ENCODE measurements at regions of chr4 and their contacts with region 1.

Region 1: GRCh38 chr4:163048447-163048846 is 118.2 kb downstream of the NAF1 start:
- DNase-seq: no peak
- ATAC-seq: peak; percentile 87
- H3K4me3 ChIP-seq: no peak overlapping the region
- H3K27ac ChIP-seq: no peak overlapping the region
- H3K4me1 ChIP-seq: no peaks in the 10 kb centered on the region
- H3K27me3 ChIP-seq: no peaks in the 10 kb centered on the region; a peak in 1 of 4 replicates
- CTCF ChIP-seq: peak; percentile 35 to 57 (median 55); a peak in 4 of 6 replicates
- EP300 ChIP-seq: no peak
- POLR2A ChIP-seq: no peak
- RAD21 ChIP-seq: peak; percentile 64

Region 2: DNA sequence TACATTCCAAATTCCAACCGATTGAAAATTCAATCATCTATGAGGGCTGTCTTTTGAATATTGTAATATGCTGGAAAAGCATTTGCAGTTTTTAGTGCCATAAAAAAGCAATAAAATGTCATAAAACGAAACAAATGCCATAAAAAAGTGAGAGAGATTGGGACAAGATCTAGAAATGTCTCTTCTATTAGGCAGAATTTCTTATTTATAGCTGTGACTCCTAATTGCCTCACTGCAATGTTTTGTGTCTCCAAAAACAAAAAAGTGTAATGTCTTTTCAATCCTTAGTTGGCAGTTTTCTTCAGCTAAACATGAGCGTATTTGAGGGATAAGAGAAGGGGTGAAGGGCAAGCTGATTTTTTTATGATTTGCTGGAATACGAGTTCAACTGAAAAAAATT is 35.6 kb before region 1 on chr4:
- CTCF ChIA-PET with region 1: no interaction called
- POLR2A ChIA-PET with region 1: no interaction called
- RAD21 ChIA-PET with region 1: no interaction called
- SMC1A ChIA-PET with region 1: no interaction called
- in situ Hi-C with region 1: no loop called
- intact Hi-C with region 1: no loop called
- DNase-seq: no peak
- ATAC-seq: no peak
- H3K4me3 ChIP-seq: no peak overlapping the region
- H3K27ac ChIP-seq: no peak overlapping the region
- H3K4me1 ChIP-seq: no peaks in the 10 kb centered on the region
- H3K27me3 ChIP-seq: no peaks in the 10 kb centered on the region
- CTCF ChIP-seq: no peak
- EP300 ChIP-seq: no peak
- POLR2A ChIP-seq: no peak
- RAD21 ChIP-seq: no peak

Region 3: DNA sequence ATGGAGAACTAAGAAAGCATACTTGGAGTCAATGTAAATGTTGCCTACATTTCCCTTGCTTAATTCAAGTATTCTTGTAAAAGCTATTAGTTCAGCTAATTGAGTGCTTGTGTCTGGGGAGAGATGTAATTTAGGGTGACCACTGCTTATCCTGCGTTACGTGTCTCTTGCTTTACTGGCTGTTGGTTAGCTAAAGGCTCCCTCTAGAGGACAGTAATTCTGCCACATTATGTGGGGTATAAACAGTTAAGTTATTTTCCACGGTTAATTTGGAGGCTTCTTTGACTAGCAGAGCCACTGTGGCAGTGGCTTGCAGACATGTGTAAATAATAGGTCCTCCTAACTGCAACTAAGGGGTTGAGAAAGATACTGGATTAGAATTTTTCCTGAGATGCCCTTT is 143.6 kb after region 1 on chr4:
- CTCF ChIA-PET with region 1: interaction called, 5 read pairs
- POLR2A ChIA-PET with region 1: no interaction called
- RAD21 ChIA-PET with region 1: no interaction called
- SMC1A ChIA-PET with region 1: interaction called, 3 read pairs
- in situ Hi-C with region 1: no loop called
- intact Hi-C with region 1: loop called (anchors 5 kb)
- DNase-seq: no peak
- ATAC-seq: peak; percentile 51
- H3K4me3 ChIP-seq: no peak overlapping the region
- H3K27ac ChIP-seq: no peak overlapping the region
- H3K4me1 ChIP-seq: no peaks in the 10 kb centered on the region
- H3K27me3 ChIP-seq: no peaks in the 10 kb centered on the region
- CTCF ChIP-seq: no peak; a peak in 1 of 6 replicates
- EP300 ChIP-seq: no peak
- POLR2A ChIP-seq: no peak
- RAD21 ChIP-seq: peak; percentile 19; the same call in 1 of the 2 replicates